ENCODE measurements at regions of chr12 and their contacts with region 1.

Region 1: DNA sequence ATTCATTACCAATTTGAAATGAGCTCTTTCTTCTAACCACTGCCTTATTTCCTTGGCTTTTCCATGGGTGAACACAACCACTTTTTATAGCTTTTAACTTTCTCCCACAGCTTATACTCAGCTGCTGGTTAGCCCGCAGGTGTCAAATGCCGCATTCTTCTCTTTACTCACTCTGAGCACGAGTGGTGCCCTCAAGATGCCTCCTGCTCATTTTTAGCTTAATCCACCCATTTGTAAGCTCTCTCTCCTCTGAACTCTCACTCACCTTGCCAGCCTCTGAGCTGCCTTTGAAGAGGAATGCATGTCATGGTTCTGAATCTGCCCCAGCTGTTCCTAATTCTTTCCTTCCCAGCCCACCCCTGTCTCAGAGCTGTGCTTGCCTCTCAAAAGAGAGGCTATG is 449.4 kb upstream of the PRICKLE1 start:
- DNase-seq: no peak

Region 2: DNA sequence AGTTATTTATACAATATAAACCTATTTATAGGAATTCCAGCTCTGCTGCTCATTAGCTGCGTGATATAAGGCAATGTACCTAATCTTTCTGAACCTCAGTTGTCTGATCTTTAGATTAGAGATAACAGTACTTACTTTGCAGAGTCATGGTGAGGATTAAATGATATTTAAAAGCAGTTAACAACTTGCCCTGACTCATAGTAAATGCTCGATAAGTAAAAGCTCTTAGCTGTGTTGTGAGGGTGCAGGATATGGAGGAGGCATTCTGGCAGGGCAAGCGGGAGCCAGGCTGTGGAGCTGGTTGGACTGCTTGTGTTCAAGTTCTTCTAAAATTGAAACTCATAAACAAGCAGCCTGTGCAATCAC is 309.5 kb before region 1 on chr12:
- CTCF ChIA-PET with region 1: interaction called, 11 read pairs
- POLR2A ChIA-PET with region 1: no interaction called
- DNase-seq: no peak

Measured in HEK293T (cell line).